Thyroid gland (tissue), 4 donors: ENCODE measurements at regions of chr9 and their contacts with region 1.

Region 1: DNA sequence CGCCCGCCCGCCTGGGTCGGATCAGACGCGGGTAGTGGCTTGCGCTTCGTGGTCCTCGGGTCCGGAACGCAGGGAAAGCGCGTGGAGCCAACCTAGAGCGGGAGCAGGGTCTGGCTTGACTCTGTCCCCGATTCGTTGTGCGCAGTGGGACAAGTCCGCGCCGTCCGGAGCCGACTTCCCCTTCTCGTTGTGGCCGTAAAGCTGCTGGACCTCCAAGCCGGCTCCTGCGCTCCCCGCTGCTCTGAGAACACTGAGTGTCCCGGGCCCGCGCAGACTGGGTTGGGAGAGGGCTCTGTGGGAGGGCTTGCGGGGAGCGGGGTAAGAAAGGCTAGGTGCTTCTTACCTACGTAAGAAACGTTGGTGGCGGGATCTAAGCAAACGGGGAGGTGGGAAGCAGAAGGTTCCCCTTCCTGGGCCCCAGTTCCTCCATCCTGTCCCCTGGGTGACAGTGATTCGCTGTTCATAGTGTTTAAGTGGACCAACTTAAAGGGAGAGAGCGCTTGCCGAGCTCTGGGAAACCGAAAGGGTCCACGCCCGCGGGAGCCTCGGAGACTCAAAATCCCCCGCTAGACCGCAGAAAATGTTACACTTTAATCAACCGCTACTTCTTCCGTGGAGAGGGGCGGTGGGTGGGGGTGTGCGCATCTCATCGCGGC is 4.3 kb upstream of the FOXE1 start:
- DNase-seq: peak; percentile 54 to 64
- H3K4me3 ChIP-seq: peak overlapping the region; percentile 47 to 74 (median 52)
- H3K27ac ChIP-seq: peak overlapping the region; percentile 92 to 96 (median 95)
- H3K4me1 ChIP-seq: peaks cover 28 to 38% of the 10 kb centered on the region in 2 donors
- H3K27me3 ChIP-seq: no peaks in the 10 kb centered on the region
- CTCF ChIP-seq: no peak
- POLR2A ChIP-seq: peak in 1 of 2 donors; percentile 37

Region 2: GRCh38 chr9:97710356-97711222 is 138.1 kb before region 1 on chr9:
- intact Hi-C with region 1: loop called (anchors 5 kb)
- DNase-seq: peak; percentile 64 to 67
- H3K4me3 ChIP-seq: no peak overlapping the region
- H3K27ac ChIP-seq: peak overlapping the region in 2 of 3 donors; percentile 55 to 63
- H3K4me1 ChIP-seq: peaks cover 10 to 31% of the 10 kb centered on the region in 2 donors
- H3K27me3 ChIP-seq: no peaks in the 10 kb centered on the region
- CTCF ChIP-seq: peak; percentile 69 to 87 (median 82)
- POLR2A ChIP-seq: no peak